ENCODE measurements at regions of chr1 and their contacts with region 1.

Region 1: GRCh38 chr1:65067491-65068201 is 80.4 kb upstream of the AK4 start:
- DNase-seq: peak; percentile 72 to 77
- ATAC-seq: peak; percentile 68 to 77
- H3K4me3 ChIP-seq: peak overlapping the region; percentile 56 to 99 (median 88)
- H3K27ac ChIP-seq: peak overlapping the region; percentile 98 to 100 (median 100)
- H3K4me1 ChIP-seq: peaks cover 39 to 41% of the 10 kb centered on the region in 2 donors
- H3K27me3 ChIP-seq: no peaks in the 10 kb centered on the region
- CTCF ChIP-seq: no peak
- POLR2A ChIP-seq: peak; percentile 78 to 93

Region 2: DNA sequence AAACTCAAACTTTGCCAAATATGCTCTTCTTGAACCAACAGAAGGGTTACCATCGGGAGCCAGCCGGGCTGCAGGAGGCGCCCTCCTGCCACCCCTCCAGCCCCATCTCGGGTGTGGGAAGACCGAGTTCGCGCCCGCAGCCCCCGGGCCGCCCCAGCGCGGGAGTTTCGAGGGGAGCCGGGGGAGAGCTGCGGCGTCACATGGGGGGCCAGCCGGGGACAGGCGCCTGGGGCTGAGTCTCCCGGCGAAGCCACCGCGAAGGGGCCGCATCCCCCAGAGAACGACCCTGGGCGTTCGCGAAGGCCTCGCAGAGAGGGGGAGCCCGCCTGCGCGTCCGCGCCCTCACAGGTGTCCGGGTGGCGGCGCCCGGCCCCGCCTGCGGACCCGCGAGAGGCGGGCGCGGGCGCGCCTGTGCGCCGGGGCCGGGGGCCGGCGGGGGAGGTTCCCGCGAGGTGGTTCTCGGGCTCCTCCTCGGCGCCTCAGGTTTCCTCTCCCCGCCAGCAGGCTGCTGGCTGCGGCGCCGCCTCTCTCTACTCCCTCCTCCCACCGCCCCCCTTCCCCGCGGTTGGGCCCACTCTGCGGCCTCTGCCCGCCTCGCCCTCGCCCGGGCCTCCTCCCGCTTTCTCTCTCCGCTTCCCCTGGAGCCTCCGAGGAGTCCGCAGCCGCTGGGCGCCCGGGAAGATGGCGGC is 323.0 kb before region 1 on chr1 and contains the start of gene RAVER2:
- in situ Hi-C with region 1: no loop called
- intact Hi-C with region 1: loop called (anchors 5 kb)
- DNase-seq: peak; percentile 35 to 50
- ATAC-seq: peak; percentile 67 to 68
- H3K4me3 ChIP-seq: peak within 1 kb of the TSS; percentile 80 to 86 (median 83)
- H3K27ac ChIP-seq: peak within 1 kb of the TSS; percentile 82 to 89 (median 82)
- H3K4me1 ChIP-seq: peaks cover 10 to 40% of the 10 kb centered on the region in 2 donors
- H3K27me3 ChIP-seq: no peaks in the 10 kb centered on the region
- CTCF ChIP-seq: peak; percentile 19 to 55 (median 39)
- POLR2A ChIP-seq: peak; percentile 16 to 32
- total RNA-seq, gene RAVER2: 8.4 to 9.4 (median 9.1) TPM

Region 3: DNA sequence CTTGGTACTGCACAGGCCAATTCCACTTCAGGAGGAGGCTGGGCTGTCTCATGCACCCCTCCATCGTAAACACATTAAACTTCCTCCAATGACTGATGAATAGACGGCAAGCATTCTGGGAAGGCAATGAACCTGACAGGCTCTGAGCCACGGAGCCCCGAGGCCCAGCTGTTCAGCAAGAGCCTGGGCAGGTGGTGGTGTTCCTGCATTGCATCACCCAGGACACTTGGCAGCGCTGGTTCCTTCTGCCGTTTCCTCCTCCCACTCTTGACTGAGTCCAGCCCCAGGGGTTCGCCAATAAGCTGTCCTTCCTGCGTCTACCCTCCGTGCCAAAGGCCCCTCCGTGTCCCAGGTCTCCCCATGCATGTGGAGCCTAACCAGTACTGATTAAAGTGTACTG is 211.1 kb before region 1 on chr1:
- in situ Hi-C with region 1: loop called in 3 of 4 experiments (anchors 10 to 25 kb)
- intact Hi-C with region 1: loop called (anchors 5 kb)
- DNase-seq: peak; percentile 79 to 90
- ATAC-seq: peak; percentile 85 to 96
- H3K4me3 ChIP-seq: no peak overlapping the region
- H3K27ac ChIP-seq: peak overlapping the region; percentile 53 to 64 (median 58)
- H3K4me1 ChIP-seq: peaks cover 7 to 9% of the 10 kb centered on the region in 2 donors
- H3K27me3 ChIP-seq: no peaks in the 10 kb centered on the region
- CTCF ChIP-seq: no peak
- POLR2A ChIP-seq: no peak

Region 4: GRCh38 chr1:64898107-64898845 is 169.4 kb before region 1 on chr1:
- in situ Hi-C with region 1: no loop called
- intact Hi-C with region 1: loop called (anchors 2 kb)
- DNase-seq: peak; percentile 96 to 98
- ATAC-seq: peak; percentile 96 to 98
- H3K4me3 ChIP-seq: peak overlapping the region in 2 of 4 donors; percentile 22 to 34
- H3K27ac ChIP-seq: peak overlapping the region; percentile 85 to 97 (median 92)
- H3K4me1 ChIP-seq: peaks cover 77 to 79% of the 10 kb centered on the region in 2 donors
- H3K27me3 ChIP-seq: no peaks in the 10 kb centered on the region
- CTCF ChIP-seq: no peak
- POLR2A ChIP-seq: peak in 1 of 2 donors; percentile 55

Region 5: DNA sequence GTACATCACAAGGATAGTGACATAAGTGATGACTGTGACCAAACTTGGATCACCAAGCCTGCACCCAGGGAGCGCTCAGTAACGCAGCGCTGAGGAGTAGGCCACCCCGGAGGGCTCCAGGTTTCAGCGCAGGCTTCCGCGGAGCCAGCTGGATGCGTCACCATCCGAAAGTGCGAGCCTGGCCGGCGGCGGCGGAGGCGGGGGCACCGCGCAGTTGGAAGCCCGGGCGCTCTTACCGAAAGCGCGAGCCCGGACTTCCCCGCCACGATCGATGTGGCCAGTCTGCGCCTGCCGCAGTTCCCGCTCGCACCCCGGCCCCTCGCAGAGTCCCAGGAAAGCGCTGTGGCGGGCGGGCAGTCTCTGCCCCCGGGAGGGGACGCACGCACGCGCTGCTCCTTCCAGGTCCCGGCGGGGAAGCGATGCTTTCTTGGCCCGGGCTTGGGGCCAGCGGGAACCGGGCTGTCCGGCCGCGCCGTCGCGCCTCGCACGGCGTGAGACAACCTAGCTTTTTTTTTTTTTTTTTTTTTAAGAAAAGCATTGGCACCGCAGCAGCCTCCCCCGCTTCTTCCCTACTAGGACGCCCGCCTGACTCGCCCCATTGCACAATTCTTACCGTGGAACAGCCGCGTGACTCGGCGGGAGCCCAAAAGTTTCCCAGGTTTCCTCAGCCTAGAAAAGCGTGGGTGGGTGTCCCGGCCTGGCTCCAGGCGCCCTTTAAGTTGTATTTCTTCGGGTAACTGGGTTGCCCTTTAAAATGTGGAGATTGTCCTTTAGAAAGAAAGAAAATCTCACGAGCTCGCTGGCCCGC is 64.9 kb before region 1 on chr1:
- in situ Hi-C with region 1: no loop called
- intact Hi-C with region 1: loop called (anchors 2 kb)
- DNase-seq: peak; percentile 80 to 93
- ATAC-seq: peak; percentile 82 to 84
- H3K4me3 ChIP-seq: peak overlapping the region; percentile 60 to 87 (median 80)
- H3K27ac ChIP-seq: peak overlapping the region; percentile 93 to 100 (median 96)
- H3K4me1 ChIP-seq: peaks cover 10 to 13% of the 10 kb centered on the region in 2 donors
- H3K27me3 ChIP-seq: no peaks in the 10 kb centered on the region
- CTCF ChIP-seq: no peak
- POLR2A ChIP-seq: peak; percentile 78 to 81

Region 6: GRCh38 chr1:65049941-65050713 is 17.5 kb before region 1 on chr1:
- in situ Hi-C with region 1: no loop called
- intact Hi-C with region 1: no loop called
- DNase-seq: no peak
- ATAC-seq: no peak
- H3K4me3 ChIP-seq: no peak overlapping the region
- H3K27ac ChIP-seq: no peak overlapping the region
- H3K4me1 ChIP-seq: peaks cover 6 to 9% of the 10 kb centered on the region in 2 donors
- H3K27me3 ChIP-seq: no peaks in the 10 kb centered on the region
- CTCF ChIP-seq: no peak
- POLR2A ChIP-seq: no peak

Region 7: GRCh38 chr1:65525266-65526048 is 457.8 kb after region 1 on chr1:
- in situ Hi-C with region 1: no loop called
- intact Hi-C with region 1: no loop called
- DNase-seq: no peak
- ATAC-seq: peak in 1 of 2 donors; percentile 27
- H3K4me3 ChIP-seq: peak overlapping the region; percentile 56 to 68 (median 64)
- H3K27ac ChIP-seq: peak overlapping the region; percentile 7 to 57 (median 42)
- H3K4me1 ChIP-seq: peaks cover 0 to 11% of the 10 kb centered on the region in 2 donors
- H3K27me3 ChIP-seq: peaks cover 23 to 38% (median 29%) of the 10 kb centered on the region in 3 donors
- CTCF ChIP-seq: no peak
- POLR2A ChIP-seq: no peak

Region 8: DNA sequence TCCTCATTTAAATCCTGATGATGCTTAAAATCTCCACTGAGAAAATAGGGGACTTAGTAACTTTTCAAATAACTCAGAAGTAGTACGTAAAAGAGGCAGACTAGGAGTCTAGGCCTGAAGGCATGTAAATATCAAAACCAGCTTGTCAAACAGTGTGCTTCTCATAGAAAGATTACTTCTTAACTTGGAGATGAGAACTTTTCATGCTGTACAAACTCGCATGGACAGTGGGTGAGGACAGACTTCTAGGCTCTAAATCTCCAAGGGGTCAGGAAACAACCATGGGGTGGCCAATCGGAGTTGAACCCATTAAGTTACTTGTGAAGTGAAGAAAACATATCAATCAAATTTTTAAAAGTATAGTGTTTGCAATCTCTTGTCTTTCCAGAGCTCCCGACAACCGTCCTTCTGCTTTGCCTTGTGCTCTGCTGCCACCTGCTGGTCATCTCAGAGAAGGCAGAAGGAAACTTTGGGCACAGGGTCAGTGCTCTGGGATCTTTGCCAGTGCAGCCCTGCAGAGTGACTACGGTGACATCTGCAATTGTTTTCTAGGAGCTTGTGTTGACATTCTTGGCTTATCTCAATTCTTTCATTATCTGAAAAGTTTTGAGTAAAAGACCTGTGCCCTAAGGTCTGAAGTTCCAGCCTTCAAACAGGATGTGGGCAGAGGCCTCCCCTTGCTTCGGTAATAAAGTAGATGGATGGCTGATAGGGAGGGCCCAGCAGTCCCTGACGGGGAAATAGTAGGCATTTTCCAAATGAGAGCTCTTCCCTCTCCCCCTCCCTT is 620.0 kb after region 1 on chr1:
- in situ Hi-C with region 1: no loop called
- intact Hi-C with region 1: loop called (anchors 10 kb)
- DNase-seq: peak; percentile 60 to 75
- ATAC-seq: peak; percentile 89 to 90
- H3K4me3 ChIP-seq: no peak overlapping the region
- H3K27ac ChIP-seq: no peak overlapping the region
- H3K4me1 ChIP-seq: peaks cover 17 to 22% of the 10 kb centered on the region in 2 donors
- H3K27me3 ChIP-seq: no peaks in the 10 kb centered on the region
- CTCF ChIP-seq: peak; percentile 91 to 96 (median 93)
- POLR2A ChIP-seq: no peak